ENCODE measurements at regions of chr16 and their contacts with region 1.

Region 1: GRCh38 chr16:83826146-83826913 is 18.6 kb downstream of the HSBP1 start:
- DNase-seq: peak; percentile 89
- H3K4me3 ChIP-seq: no peak overlapping the region
- H3K27ac ChIP-seq: no peak overlapping the region
- H3K4me1 ChIP-seq: peaks cover 0 to 6% (median 4%) of the 10 kb centered on the region in 4 donors
- H3K27me3 ChIP-seq: no peaks in the 10 kb centered on the region
- CTCF ChIP-seq: peak; percentile 86 to 95 (median 88)
- EP300 ChIP-seq: no peak
- POLR2A ChIP-seq: no peak

Region 2: GRCh38 chr16:83952940-83953795 is 126.8 kb after region 1 on chr16 and contains the start of gene OSGIN1:
- in situ Hi-C with region 1: no loop called
- intact Hi-C with region 1: loop called (anchors 10 kb)
- DNase-seq: peak; percentile 96
- H3K4me3 ChIP-seq: peak within 1 kb of the TSS; percentile 48 to 73 (median 54)
- H3K27ac ChIP-seq: peak within 1 kb of the TSS; percentile 91 to 96 (median 94)
- H3K4me1 ChIP-seq: peaks cover 11 to 30% (median 22%) of the 10 kb centered on the region in 4 donors
- H3K27me3 ChIP-seq: no peaks in the 10 kb centered on the region
- CTCF ChIP-seq: no peak
- EP300 ChIP-seq: no peak
- POLR2A ChIP-seq: peak; percentile 98
- total RNA-seq, gene OSGIN1: 10.7 to 26.2 (median 16.7) TPM

Measured in transverse colon (tissue), 4 donors.